Heart left ventricle (tissue), 16 donors: ENCODE measurements at regions of chr17 and their contacts with region 1.

Region 1: DNA sequence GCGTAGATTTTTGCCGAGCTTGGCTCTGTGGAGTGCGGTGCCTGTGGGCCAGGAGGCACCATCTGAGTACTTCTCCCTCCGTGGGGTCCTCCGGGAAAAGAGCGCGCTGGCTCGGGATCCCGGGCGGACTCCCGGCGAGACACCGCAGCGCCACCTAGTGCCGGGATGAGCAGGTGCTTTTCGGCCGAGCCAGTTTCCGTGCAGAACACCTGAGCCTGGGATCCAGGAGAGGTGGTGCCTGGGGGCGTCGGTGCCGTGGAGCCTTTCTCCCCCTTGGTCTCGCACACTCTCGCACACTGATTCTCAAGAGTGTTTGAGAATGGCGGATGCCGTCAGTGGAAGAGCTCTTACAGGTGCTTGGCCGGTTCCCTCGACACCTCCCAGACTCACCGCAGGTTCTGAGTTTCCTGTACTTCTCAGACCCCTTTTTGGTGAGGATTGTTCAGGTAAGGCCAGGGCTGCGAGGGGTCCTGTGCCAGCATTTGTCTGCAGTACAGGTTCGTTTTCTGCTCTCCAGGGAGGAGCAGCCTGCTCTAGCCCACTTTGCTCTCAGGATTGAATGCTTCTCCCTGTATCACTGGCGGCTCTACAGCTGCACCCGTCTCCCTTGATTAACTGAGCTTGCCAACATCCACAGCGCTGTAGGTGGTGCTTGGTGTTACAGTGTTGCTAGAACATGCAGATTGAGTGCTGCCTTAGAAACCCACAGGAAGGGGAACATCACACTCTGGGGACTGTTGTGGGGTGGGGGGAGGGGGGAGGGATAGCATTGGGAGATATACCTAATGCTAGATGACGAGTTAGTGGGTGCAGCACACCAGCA is 23.3 kb downstream of the TBCD start:
- DNase-seq: peak in 4 of 5 donors; percentile 63 to 83 (median 70)
- ATAC-seq: peak in 3 of 4 donors; percentile 49 to 58 (median 54)
- H3K4me3 ChIP-seq: no peak overlapping the region
- H3K27ac ChIP-seq: no peak overlapping the region
- H3K4me1 ChIP-seq: peaks cover 0 to 8% (median 0%) of the 10 kb centered on the region in 12 donors
- H3K27me3 ChIP-seq: no peaks in the 10 kb centered on the region
- CTCF ChIP-seq: peak; percentile 77 to 92 (median 84)
- POLR2A ChIP-seq: no peak

Region 2: GRCh38 chr17:82351716-82352488 is 423.3 kb before region 1 on chr17:
- intact Hi-C with region 1: loop called in 7 of 10 experiments (anchors 5 to 10 kb)
- DNase-seq: peak; percentile 79 to 88 (median 85)
- ATAC-seq: peak; percentile 49 to 91 (median 87)
- H3K4me3 ChIP-seq: no peak overlapping the region
- H3K27ac ChIP-seq: no peak overlapping the region
- H3K4me1 ChIP-seq: peaks cover 0 to 14% (median 3%) of the 10 kb centered on the region in 12 donors
- H3K27me3 ChIP-seq: peaks cover 0 to 11% (median 0%) of the 10 kb centered on the region in 9 donors
- CTCF ChIP-seq: peak; percentile 92 to 99 (median 97)
- POLR2A ChIP-seq: no peak